Activated T-helper 2 cell treated with anti-CD3 and anti-CD28 coated beads, Interferon-gamma antibody, Interleukin-2, Interleukin-4, amounts not matched to agents 10 μg/mL and 5 μg/mL and 100 μg/mL, durations not matched to agents 14 hours and 24 hours and 36 hours (primary cell): ENCODE measurements at regions of chr7 and their contacts with region 1.

Region 1: DNA sequence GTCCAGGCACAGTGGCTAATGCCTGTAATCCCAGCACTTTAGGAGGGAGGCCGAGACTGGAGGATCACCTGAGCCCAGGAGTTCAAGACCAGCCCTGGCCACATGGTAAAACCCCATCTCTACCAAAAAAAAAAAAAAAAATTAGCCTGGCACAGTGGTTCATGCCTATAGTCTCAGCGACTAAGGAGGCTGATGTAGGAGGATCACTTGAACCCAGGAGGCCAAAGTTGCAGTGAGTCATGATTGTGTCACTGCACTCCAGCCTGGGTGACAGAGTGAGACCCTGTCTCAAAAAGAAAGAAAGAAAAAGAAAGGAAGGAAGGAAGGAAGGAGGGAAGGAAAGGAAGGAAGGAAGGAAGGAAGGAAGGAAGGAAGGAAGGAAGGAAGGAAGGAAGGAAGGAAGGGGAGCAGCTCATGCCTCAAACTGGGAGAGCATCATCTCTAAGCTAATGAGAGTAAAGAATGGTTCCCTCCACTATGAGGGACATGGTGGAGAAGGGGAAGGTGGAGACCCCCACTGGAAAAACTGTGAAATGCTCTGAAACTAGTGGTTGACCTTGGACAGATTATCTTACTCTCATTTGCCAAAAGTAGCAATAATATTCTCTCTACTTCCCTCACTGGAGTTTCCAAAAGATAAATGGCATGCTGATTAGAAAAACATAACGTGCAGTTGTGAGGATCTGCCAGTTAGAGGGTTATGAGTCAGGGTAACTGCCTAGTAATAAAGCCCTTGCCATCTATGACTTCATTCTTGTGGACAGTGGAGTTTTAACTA is 16.8 kb downstream of the GIMAP5 start:
- DNase-seq: no peak
- H3K4me3 Mint-ChIP-seq: no peak overlapping the region
- H3K27ac Mint-ChIP-seq: peak overlapping the region; percentile 93
- H3K4me1 Mint-ChIP-seq: peaks cover 48% of the 10 kb centered on the region
- H3K27me3 Mint-ChIP-seq: no peaks in the 10 kb centered on the region

Region 2: DNA sequence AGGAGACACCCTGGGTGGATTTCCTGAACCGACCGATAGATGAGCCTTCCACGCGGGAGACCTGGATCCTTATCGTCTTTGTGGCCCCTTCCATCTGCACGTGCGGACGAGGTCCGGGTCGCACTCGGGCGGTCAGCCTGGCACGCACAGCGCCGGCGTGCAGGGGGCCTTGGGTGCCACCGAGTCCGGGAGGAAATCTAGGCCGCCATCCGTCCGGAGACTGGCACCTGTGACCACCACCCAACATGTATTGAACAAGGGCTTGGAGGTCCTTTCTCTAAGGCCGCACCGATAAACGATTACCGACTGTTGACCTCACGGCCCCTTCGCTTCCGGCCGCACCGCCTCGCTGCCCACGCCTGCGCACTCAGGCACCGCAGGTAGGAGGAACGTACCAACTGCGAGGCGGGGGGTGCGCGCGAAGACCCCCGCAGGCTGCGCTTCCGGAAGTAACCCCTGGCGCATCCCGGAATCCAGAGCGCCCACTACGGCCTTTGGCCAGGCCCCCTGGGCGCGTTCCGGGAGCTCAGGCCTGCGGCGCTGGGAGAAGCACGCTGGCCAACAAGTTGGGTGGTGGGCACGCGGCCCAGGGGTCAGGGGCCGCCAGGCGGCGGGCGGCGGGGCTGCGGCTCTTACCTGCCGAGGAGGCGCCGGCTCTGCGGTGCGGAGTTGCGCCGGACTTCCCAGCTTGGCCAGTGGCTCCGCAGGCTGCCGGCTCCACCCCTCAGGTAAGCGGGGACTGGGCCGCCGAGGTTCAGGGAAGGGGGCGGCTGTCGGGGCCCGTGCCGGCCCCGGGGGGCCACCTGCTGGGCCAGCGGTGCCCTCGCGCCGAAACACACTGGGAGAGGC is 431.0 kb before region 1 on chr7 and contains the starts of genes ACTR3C and LRRC61:
- intact Hi-C with region 1: loop called (anchors 2 kb)
- DNase-seq: peak; percentile 57
- H3K4me3 Mint-ChIP-seq: peak within 1 kb of the TSS; percentile 97
- H3K27ac Mint-ChIP-seq: peak within 1 kb of the TSS; percentile 99
- H3K4me1 Mint-ChIP-seq: peaks cover 47% of the 10 kb centered on the region
- H3K27me3 Mint-ChIP-seq: no peaks in the 10 kb centered on the region
- total RNA-seq, gene ACTR3C: 7.0 and 7.9 TPM in 2 replicates
- total RNA-seq, gene LRRC61: 22.7 and 25.8 TPM in 2 replicates

Region 3: GRCh38 chr7:150378853-150379440 is 375.1 kb before region 1 on chr7 and contains the start of gene ZNF775:
- intact Hi-C with region 1: loop called (anchors 5 kb)
- DNase-seq: peak; percentile 92
- H3K4me3 Mint-ChIP-seq: peak within 1 kb of the TSS; percentile 94
- H3K27ac Mint-ChIP-seq: peak within 1 kb of the TSS; percentile 76
- H3K4me1 Mint-ChIP-seq: peaks cover 49% of the 10 kb centered on the region
- H3K27me3 Mint-ChIP-seq: no peaks in the 10 kb centered on the region
- total RNA-seq, gene ZNF775: 4.5 and 5.5 TPM in 2 replicates

Region 4: GRCh38 chr7:150502519-150502918 is 251.5 kb before region 1 on chr7:
- intact Hi-C with region 1: loop called (anchors 5 kb)
- DNase-seq: peak; percentile 31
- H3K4me3 Mint-ChIP-seq: peak overlapping the region; percentile 40
- H3K27ac Mint-ChIP-seq: peak overlapping the region; percentile 81
- H3K4me1 Mint-ChIP-seq: peaks cover 60% of the 10 kb centered on the region
- H3K27me3 Mint-ChIP-seq: no peaks in the 10 kb centered on the region

Region 5: DNA sequence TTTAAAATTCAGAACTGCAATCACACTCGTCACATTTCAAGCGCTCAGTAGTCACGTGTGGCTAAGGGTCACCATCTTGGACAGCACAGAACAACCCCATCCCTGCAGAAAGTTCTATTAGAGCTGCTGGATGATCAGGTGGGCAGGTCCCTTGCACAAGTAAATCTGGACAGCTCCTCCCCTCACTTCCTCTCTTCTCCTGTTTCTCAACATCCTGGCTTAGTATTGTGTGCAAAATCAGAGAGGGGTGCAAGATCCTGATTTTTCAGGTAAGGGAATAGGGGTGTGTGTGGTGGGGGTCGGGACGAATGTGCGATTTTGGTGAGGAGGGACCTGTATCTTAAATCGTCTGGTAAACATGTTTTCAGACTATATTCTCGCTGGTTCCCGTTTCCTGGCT is 186.8 kb before region 1 on chr7 and contains the start of gene GIMAP4:
- intact Hi-C with region 1: loop called (anchors 2 kb)
- DNase-seq: no peak
- H3K4me3 Mint-ChIP-seq: peak within 1 kb of the TSS; percentile 89
- H3K27ac Mint-ChIP-seq: peak within 1 kb of the TSS; percentile 97
- H3K4me1 Mint-ChIP-seq: peaks cover 52% of the 10 kb centered on the region
- H3K27me3 Mint-ChIP-seq: no peaks in the 10 kb centered on the region
- total RNA-seq, gene GIMAP4: 36.7 and 39.1 TPM in 2 replicates

Region 6: GRCh38 chr7:150675714-150676113 is 78.3 kb before region 1 on chr7:
- intact Hi-C with region 1: loop called (anchors 2 kb)
- DNase-seq: no peak
- H3K4me3 Mint-ChIP-seq: no peak overlapping the region
- H3K27ac Mint-ChIP-seq: peak overlapping the region; percentile 61
- H3K4me1 Mint-ChIP-seq: peaks cover 61% of the 10 kb centered on the region
- H3K27me3 Mint-ChIP-seq: no peaks in the 10 kb centered on the region

Region 7: GRCh38 chr7:150737265-150738055 is 16.6 kb before region 1 on chr7 and contains the start of gene GIMAP5:
- intact Hi-C with region 1: loop called (anchors 1 kb)
- DNase-seq: peak; percentile 44
- H3K4me3 Mint-ChIP-seq: peak within 1 kb of the TSS; percentile 91
- H3K27ac Mint-ChIP-seq: peak within 1 kb of the TSS; percentile 91
- H3K4me1 Mint-ChIP-seq: peaks cover 78% of the 10 kb centered on the region
- H3K27me3 Mint-ChIP-seq: no peaks in the 10 kb centered on the region
- total RNA-seq, gene GIMAP5: 42.9 and 46.7 TPM in 2 replicates